ENCODE measurements at regions of chr17 and their contacts with region 1.

Region 1: GRCh38 chr17:75289115-75289831 is at the start of gene SLC25A19:
- DNase-seq: peak; percentile 98
- H3K4me3 ChIP-seq: peak within 1 kb of the TSS; percentile 95
- H3K27me3 ChIP-seq: no peaks in the 10 kb centered on the region
- CTCF ChIP-seq: peak; percentile 22
- polyA plus RNA-seq, gene SLC25A19: 8.3 and 12.0 TPM in 2 replicates

Region 2: DNA sequence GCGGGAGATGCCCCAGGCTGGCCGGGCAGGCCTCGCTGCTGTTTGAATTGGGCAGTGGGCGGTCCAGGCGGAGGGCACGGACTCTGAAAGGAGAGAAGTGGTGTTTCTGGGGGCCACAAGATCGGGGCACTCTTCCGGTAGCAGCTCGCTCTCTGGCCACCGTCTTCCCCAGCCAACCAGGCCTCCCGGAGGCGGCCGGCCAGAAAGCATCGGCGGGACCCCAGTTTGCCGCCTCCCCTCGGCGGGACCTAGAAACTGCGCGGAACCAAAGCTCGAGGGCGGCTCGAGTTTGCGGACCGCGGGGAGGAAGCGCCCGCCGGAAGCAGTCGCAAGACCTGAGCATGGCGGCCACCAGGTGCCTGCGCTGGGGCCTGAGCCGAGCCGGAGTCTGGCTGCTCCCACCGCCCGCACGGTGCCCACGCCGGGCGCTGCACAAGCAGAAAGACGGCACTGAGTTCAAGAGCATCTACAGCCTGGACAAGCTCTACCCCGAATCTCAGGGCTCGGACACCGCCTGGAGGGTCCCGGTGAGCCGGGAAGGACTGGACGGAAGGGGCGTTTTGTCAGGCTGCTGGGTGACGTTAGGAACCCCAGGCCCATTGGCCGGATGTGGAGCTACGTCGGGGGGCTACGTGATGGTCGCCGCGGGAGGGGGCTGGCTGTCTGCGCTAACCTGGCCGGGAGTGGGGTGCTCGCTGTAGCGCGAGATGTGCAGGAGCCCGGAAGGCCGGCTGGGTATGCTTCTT is 276.8 kb before region 1 on chr17 and contains the start of gene MRPL58:
- CTCF ChIA-PET with region 1: no interaction called
- POLR2A ChIA-PET with region 1: no interaction called
- DNase-seq: no peak
- H3K4me3 ChIP-seq: peak within 1 kb of the TSS; percentile 69
- H3K27me3 ChIP-seq: no peaks in the 10 kb centered on the region
- CTCF ChIP-seq: peak; percentile 72
- polyA plus RNA-seq, gene MRPL58: 44.2 and 50.8 TPM in 2 replicates

Region 3: GRCh38 chr17:75277664-75278071 is 11.6 kb before region 1 on chr17:
- CTCF ChIA-PET with region 1: interaction called, 11 read pairs
- POLR2A ChIA-PET with region 1: interaction called, 6 read pairs
- DNase-seq: peak; percentile 76
- H3K4me3 ChIP-seq: no peak overlapping the region
- H3K27me3 ChIP-seq: no peaks in the 10 kb centered on the region
- CTCF ChIP-seq: no peak

Region 4: GRCh38 chr17:75309025-75309772 is 19.9 kb after region 1 on chr17:
- CTCF ChIA-PET with region 1: no interaction called
- POLR2A ChIA-PET with region 1: no interaction called
- DNase-seq: no peak
- H3K4me3 ChIP-seq: no peak overlapping the region
- H3K27me3 ChIP-seq: no peaks in the 10 kb centered on the region
- CTCF ChIP-seq: no peak

Region 5: GRCh38 chr17:75338335-75338734 is 49.1 kb after region 1 on chr17:
- CTCF ChIA-PET with region 1: no interaction called
- POLR2A ChIA-PET with region 1: no interaction called
- DNase-seq: no peak
- H3K4me3 ChIP-seq: no peak overlapping the region
- H3K27me3 ChIP-seq: no peaks in the 10 kb centered on the region
- CTCF ChIP-seq: no peak